ENCODE measurements at regions of chr13 and their contacts with region 1.

Region 1: DNA sequence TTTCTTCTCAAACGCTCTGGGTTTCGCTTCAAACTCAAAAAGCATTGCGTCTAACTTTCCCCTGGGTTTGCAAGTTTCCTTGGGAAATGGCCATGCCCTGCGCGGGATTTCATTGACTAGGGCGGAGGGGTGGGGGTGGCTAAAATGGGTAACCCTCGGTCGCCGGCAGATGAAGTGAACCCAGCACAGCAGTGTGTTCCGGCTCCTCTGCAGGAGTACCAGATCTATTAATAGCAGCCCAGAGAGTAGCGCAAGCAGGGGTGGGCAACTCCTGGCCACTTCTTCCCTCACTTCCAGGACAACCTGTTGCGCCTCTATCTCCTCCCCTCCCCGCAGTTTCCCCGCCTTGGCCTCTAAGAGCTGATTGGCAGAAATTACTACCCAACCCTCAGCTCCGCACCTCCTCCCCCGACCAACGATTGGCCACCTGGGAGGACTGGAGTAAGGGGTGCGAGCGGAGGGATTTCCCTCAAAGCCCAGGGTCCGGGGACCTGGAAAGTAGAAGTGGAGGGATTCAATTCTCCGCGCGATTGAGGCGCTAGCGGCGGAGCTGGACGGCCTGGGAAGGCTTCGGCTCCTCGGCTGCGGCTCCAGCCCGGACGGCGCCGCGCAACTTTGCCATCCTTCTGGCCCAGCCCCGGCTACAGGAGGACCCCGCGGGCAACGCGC is at the start of gene FREM2:
- DNase-seq: peak in 40 of 42 donors; percentile 10 to 78 (median 38)

Region 2: DNA sequence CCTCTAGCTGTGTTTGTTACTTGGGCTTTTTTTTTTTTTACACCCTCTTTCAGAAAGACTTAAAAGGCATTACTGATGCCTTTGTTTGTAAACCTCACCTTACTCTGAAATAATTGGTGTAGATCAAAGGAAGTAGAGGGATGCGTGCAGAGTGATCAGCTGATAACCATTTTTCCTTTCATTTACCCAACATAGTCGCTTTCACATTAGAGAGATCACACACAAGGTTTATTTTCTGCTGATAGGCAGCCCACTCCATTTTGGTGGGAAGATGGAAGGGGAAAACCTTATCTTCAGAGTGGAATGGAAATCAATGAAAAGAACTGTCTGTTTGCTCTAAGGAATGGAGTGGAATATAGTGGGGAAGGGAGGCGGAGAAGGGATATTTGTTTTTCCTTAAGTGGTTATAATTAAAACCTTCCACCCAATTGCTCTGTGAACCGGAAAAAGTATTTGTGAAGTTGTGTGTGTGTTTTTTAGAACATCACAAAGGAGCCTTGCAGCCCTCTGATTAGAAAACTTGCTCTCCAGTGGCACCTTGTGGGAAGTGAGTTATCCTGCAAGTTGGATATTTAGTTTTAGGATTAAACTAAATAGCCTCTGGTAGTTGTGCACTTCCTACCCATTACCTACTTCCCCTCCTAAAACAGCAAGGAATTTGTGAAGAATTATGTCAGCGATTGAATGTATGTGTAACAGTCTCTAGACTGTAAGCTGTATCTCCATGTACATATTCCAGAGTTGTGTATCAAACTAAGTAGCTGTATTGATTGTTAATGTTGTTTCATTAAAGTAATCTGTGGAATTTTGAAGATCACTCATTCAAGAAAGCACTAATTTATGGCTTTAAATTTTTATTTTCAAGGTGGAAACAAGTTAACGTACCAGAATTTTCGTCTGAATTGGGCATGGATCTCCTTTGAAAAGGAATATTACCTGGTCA is 77.0 kb after region 1 on chr13:
- intact Hi-C with region 1: loop called (anchors 5 kb)
- DNase-seq: peak in 32 of 42 donors; percentile 16 to 82 (median 56)

Region 3: GRCh38 chr13:38866649-38867048 is 179.9 kb after region 1 on chr13:
- intact Hi-C with region 1: loop called (anchors 10 kb)
- DNase-seq: peak in 2 of 42 donors; percentile 12 to 17

Measured in head of caudate nucleus (tissue), 42 donors.